K562 (cell line): ENCODE measurements at regions of chr5 and their contacts with region 1.

Region 1: DNA sequence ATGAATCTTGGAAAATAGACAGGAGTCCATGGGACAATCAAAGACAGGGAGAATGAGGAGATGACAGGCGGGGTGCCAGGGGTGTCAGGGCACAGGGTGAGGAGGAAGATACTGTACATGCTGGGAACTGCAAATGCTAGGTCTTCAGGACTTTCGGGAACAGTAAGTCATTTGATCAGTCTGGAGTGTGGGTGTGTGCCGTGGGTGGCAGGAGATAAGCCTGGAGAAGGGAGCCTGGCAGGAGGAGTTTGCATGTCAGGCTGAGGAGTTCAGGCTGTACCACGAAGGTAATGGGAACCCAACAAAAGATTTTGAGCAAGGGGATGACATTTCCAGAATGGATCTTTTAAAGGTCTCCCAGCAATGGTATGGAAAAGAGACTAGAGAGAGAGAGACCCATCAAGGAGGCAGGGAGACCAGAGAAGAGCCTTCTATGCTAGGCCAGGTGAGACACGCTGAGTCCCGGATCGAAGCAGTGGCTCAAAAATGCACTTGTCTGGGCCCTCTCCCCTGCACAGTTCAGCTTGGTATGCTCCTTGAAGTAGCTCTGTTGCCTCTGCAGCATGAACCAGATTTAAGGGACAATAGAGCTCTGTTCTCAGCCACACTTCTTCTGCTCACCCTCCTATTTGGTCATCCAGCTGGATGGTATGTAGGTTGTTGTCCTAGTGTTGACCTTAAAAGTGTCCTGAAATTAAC is 77.0 kb upstream of the FER start:
- DNase-seq: no peak
- ATAC-seq: no peak
- H3K4me3 ChIP-seq: no peak overlapping the region
- H3K27ac ChIP-seq: no peak overlapping the region
- H3K4me1 ChIP-seq: no peaks in the 10 kb centered on the region
- H3K27me3 ChIP-seq: peaks cover 2 to 6% of the 10 kb centered on the region in 2 experiments; a peak in 3 of 5 replicates
- CTCF ChIP-seq: no peak
- EP300 ChIP-seq: no peak
- POLR2A ChIP-seq: no peak
- RAD21 ChIP-seq: no peak

Region 2: DNA sequence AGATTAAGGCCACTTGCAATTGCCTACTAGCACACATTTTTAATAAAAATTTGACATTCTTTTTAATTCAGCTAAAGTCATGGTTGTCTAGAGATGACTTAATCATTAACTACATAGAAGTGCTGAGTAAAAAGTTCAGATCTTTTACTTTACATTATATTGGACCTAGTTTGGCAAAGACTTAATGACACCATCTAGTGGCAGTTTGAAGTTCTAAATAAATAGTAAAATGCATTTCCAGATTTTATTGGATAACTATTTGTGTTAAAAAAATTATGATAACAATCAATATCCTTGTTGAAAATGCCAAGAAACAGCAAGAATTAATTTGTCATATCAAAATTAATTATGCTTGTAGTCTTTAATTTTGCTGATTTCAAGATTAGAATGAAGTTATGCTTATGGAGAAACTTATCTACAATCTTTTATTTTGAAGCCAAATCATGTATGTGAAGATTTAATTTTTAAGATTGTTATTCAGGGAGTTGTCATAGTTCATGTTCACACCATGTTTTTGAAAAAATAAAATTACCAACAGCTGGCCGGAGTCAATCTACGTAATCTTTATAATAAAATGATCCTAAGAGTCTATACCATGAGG is 808.6 kb after region 1 on chr5:
- CTCF ChIA-PET with region 1: no interaction called
- POLR2A ChIA-PET with region 1: no interaction called
- in situ Hi-C with region 1: loop called (anchors 10 kb)
- intact Hi-C with region 1: no loop called
- DNase-seq: no peak
- ATAC-seq: no peak
- H3K4me3 ChIP-seq: no peak overlapping the region
- H3K27ac ChIP-seq: no peak overlapping the region
- H3K4me1 ChIP-seq: no peaks in the 10 kb centered on the region
- H3K27me3 ChIP-seq: no peaks in the 10 kb centered on the region; a peak in 2 of 5 replicates
- CTCF ChIP-seq: peak in 1 of 3 experiments; percentile 56; a peak in 2 of 6 replicates
- EP300 ChIP-seq: no peak
- POLR2A ChIP-seq: no peak
- RAD21 ChIP-seq: peak; percentile 27 to 61